ENCODE measurements at regions of chr3 and their contacts with region 1.

Region 1: DNA sequence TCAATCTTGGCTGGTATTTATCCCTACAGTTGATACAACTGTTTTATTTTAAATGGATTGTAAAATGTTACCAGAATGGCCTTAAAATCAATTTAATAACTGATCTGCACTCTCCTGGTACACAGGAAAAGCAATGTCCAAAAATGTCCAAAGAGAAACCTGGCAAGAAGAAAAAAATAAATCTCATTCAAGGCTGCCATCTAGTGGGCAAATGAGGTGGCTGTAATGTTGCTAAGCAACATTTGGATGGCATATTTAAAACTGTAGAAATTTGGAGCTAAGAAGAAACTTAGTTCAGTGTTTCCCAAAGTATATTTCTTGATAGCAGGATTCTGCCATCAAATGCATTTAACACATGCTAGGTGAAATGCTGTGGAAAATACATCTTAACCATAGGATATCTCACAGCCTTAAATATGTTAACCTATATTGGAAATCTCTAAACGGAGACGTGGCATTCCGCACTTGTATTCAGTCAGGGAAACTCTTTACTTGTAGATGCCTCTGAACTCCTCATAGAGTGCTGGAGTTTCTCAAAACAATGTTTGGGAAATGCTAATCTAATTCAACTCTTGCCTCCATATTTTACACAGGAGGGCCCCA is 216.8 kb downstream of the ERC2 start:
- DNase-seq: peak; percentile 31
- H3K4me3 ChIP-seq: no peak overlapping the region
- H3K27ac ChIP-seq: no peak overlapping the region
- H3K4me1 ChIP-seq: no peaks in the 10 kb centered on the region
- H3K27me3 ChIP-seq: peaks cover 3% of the 10 kb centered on the region
- CTCF ChIP-seq: peak; percentile 71 to 77

Region 2: GRCh38 chr3:55721716-55722484 is 529.5 kb before region 1 on chr3:
- CTCF ChIA-PET with region 1: interaction called, 3 read pairs
- dilution Hi-C with region 1: no loop called
- in situ Hi-C with region 1: loop called in 1 of 2 experiments (anchors 25 kb)
- intact Hi-C with region 1: loop called (anchors 5 kb)
- DNase-seq: peak; percentile 27
- H3K4me3 ChIP-seq: no peak overlapping the region
- H3K27ac ChIP-seq: no peak overlapping the region
- H3K4me1 ChIP-seq: no peaks in the 10 kb centered on the region
- H3K27me3 ChIP-seq: peaks cover 4% of the 10 kb centered on the region
- CTCF ChIP-seq: peak; percentile 73 to 76

Region 3: GRCh38 chr3:55818485-55818884 is 433.0 kb before region 1 on chr3:
- CTCF ChIA-PET with region 1: no interaction called
- dilution Hi-C with region 1: no loop called
- in situ Hi-C with region 1: no loop called
- intact Hi-C with region 1: loop called (anchors 10 kb)
- DNase-seq: no peak
- H3K4me3 ChIP-seq: no peak overlapping the region
- H3K27ac ChIP-seq: no peak overlapping the region
- H3K4me1 ChIP-seq: peaks cover under 1% of the 10 kb centered on the region
- H3K27me3 ChIP-seq: no peaks in the 10 kb centered on the region
- CTCF ChIP-seq: peak; percentile 3 to 20

Region 4: GRCh38 chr3:56042326-56042951 is 209.0 kb before region 1 on chr3:
- CTCF ChIA-PET with region 1: no interaction called
- dilution Hi-C with region 1: no loop called
- in situ Hi-C with region 1: no loop called
- intact Hi-C with region 1: loop called (anchors 2 kb)
- DNase-seq: peak; percentile 16
- H3K4me3 ChIP-seq: no peak overlapping the region
- H3K27ac ChIP-seq: no peak overlapping the region
- H3K4me1 ChIP-seq: no peaks in the 10 kb centered on the region
- H3K27me3 ChIP-seq: no peaks in the 10 kb centered on the region
- CTCF ChIP-seq: peak; percentile 54 to 70

Region 5: GRCh38 chr3:56131974-56132590 is 119.4 kb before region 1 on chr3:
- CTCF ChIA-PET with region 1: no interaction called
- dilution Hi-C with region 1: no loop called
- in situ Hi-C with region 1: no loop called
- intact Hi-C with region 1: loop called (anchors 5 kb)
- DNase-seq: peak; percentile 89
- H3K4me3 ChIP-seq: no peak overlapping the region
- H3K27ac ChIP-seq: no peak overlapping the region
- H3K4me1 ChIP-seq: peaks cover 27% of the 10 kb centered on the region
- H3K27me3 ChIP-seq: no peaks in the 10 kb centered on the region
- CTCF ChIP-seq: no peak

Measured in mammary epithelial cell (primary cell).